Posterior vena cava (tissue), 2 donors: ENCODE measurements at regions of chr5 and their contacts with region 1.

Region 1: DNA sequence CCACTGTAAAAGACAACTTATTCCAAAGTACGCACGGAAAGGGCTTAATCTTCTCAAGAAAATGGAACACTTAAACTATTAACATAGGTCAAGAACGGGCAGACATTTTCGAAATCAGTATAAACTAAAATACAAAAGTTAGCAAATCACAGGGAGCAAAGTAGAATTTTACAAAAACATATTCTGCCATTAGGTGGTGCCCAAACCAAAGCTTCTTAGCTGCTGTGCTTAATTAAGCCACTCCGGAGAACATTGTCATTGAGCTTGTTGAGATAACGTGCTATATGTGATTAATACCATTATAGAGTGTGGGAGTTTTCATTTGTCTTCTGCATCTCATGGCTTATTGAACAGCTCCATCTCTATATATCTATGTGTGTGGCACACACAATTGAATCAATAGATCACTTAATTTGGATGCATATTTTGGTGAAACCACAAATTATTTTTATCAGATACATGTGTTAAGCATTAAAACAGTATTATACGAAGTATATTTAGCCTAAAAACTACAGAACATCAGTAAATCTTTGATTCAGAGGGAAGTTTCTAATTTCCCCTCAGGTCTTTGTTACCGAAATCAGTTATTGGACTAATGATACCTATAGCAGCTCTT is 23.4 kb downstream of the UBLCP1 start:
- DNase-seq: no peak

Region 2: DNA sequence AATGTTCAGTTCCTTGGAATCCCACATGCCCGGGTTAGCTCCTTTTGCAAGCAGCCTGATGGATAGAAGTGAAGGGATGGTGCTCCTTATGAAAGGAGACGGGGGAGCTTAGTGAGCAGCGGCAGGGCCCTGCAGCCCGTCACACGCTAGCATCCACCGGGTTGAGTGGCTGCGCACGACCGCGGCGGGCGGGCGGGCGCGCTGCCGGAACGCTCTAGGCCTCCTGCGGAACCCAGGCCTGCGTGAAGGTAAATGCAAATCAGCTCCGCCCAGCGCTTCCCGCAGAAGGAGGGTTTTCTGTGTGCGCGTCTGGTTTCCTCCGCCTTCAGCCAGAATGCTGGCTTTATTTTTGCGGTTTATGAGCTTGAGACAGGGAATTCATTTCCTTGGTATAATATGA is 24.0 kb after region 1 on chr5:
- intact Hi-C with region 1: no loop called
- DNase-seq: no peak

Region 3: DNA sequence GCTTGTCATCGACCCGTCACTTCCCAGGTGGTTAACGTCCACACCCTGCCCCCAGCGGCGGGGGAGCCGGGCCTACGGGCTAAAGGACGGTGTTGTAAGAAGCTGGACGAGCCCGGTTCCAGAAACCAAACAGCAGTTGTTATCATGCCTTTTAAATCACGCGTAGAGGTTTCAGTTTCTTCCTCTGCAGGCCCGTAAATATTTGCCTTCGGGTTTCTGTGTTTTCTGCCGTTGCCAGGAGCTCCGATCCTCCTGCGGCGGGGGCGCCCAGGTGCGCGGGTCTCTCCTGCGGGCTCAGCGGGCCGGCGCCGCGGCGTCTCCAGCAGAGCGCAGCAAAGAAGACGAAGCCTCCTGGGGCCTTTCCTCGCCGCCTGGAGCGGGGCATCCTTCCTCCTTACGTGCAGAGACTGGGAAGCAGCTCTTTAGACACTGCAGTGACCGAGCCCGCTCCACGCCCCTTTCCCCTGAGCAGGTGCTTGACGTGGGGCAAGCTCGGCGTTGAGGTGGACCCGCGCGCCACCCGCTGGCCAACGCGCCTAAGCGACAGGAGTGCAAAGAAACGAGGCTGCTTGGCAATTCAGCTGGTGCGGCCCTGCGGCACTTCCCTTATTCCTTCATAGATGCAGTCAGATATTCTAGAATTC is 700.6 kb after region 1 on chr5:
- intact Hi-C with region 1: loop called in 1 of 2 experiments (anchors 10 kb)
- DNase-seq: peak; percentile 89